ENCODE measurements at regions of chr22 and their contacts with region 1.

Region 1: GRCh38 chr22:43658823-43659222 is 153.3 kb downstream of the EFCAB6 start:
- DNase-seq: no peak
- H3K4me3 ChIP-seq: no peak overlapping the region
- H3K27ac ChIP-seq: no peak overlapping the region
- H3K4me1 ChIP-seq: no peaks in the 10 kb centered on the region
- H3K27me3 ChIP-seq: no peaks in the 10 kb centered on the region
- CTCF ChIP-seq: no peak

Region 2: DNA sequence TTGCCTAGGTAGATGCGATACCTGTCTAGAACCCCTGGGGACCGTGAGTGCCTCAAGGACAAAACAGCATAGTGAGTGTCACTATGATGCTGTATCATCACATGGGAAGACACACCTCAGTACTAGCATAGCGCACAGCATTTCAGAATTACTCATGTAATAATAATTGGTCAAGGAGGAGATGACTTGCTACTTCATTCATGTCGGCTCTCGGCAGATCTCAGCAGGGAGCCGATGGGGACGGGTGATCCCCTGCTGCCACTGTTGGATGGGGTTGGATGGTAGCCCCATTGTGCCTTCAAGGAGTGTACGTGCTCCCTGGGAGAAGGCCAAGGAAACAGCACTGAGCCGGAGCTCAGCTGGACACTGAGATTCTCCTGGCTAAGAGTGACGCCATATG is 33.6 kb before region 1 on chr22:
- CTCF ChIA-PET with region 1: no interaction called
- dilution Hi-C with region 1: loop called (anchors 5 kb)
- in situ Hi-C with region 1: no loop called
- intact Hi-C with region 1: no loop called
- DNase-seq: no peak
- H3K4me3 ChIP-seq: no peak overlapping the region
- H3K27ac ChIP-seq: no peak overlapping the region
- H3K4me1 ChIP-seq: no peaks in the 10 kb centered on the region
- H3K27me3 ChIP-seq: no peaks in the 10 kb centered on the region
- CTCF ChIP-seq: no peak

Region 3: GRCh38 chr22:43698403-43698802 is 39.6 kb after region 1 on chr22:
- CTCF ChIA-PET with region 1: no interaction called
- dilution Hi-C with region 1: no loop called
- in situ Hi-C with region 1: no loop called
- intact Hi-C with region 1: no loop called
- DNase-seq: peak; percentile 3
- H3K4me3 ChIP-seq: no peak overlapping the region
- H3K27ac ChIP-seq: no peak overlapping the region
- H3K4me1 ChIP-seq: no peaks in the 10 kb centered on the region
- H3K27me3 ChIP-seq: no peaks in the 10 kb centered on the region
- CTCF ChIP-seq: no peak